ENCODE measurements at regions of chr3 and their contacts with region 1.

Region 1: DNA sequence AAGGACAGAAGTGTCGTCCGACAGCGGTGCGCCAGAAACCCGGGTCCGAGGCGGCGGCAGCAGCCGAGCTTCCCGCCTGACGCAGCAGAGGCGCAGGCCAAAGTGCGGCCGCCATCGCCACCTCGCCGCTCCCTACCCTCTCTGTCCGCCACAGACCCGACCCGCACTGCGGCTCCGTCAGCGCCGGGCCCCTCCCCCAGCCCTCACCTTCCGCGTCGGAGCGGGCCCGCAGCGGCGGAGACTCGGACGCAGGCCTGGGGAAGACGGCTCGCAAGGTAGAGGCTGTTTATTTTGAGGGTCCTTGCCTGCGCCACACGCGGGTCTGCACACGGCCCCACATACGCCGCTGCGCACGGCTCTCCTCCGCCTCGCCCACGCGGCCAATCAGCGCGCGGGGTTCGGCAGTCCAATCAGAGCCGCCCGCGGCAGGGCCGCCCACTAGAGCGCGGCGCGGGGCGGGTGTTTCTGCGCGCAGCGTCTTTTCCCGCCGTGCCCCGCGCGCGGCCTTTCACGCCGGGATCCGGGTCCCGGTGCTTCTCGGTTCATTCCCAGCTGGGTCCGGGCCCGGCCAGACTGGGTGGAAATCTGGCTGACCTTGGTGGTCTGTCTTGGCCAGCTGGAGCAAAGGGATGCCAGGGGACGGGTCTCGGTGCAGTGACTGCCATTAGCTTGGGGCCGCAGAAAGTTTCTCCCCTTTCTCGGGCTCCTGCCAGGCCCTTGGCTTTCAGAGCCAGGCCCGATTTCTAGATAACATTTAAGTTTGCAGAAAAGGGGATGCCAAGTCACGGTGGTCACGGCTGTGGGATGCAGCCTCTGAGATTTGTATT is at the start of gene CNBP:
- DNase-seq: peak; percentile 95
- ATAC-seq: peak; percentile 97
- H3K4me3 ChIP-seq: peak within 1 kb of the TSS; percentile 71 to 100 (median 98)
- H3K4me3 Mint-ChIP-seq: peak within 1 kb of the TSS; percentile 89
- H3K27ac ChIP-seq: peak within 1 kb of the TSS; percentile 90 to 92
- H3K27ac Mint-ChIP-seq: peak within 1 kb of the TSS; percentile 99
- H3K4me1 ChIP-seq: peaks cover 23 to 52% of the 10 kb centered on the region in 2 donors
- H3K4me1 Mint-ChIP-seq: peaks cover 44% of the 10 kb centered on the region
- H3K27me3 ChIP-seq: no peaks in the 10 kb centered on the region
- H3K27me3 Mint-ChIP-seq: no peaks in the 10 kb centered on the region
- CTCF ChIP-seq: no peak
- total RNA-seq, gene CNBP: 294 and 304 TPM in 2 replicates

Region 2: GRCh38 chr3:128879125-128879969 is 304.4 kb before region 1 on chr3 and contains the start of gene ACAD9:
- CTCF ChIA-PET with region 1: no interaction called
- POLR2A ChIA-PET with region 1: no interaction called
- intact Hi-C with region 1: loop called (anchors 5 kb)
- DNase-seq: peak; percentile 97
- ATAC-seq: peak; percentile 96
- H3K4me3 ChIP-seq: peak within 1 kb of the TSS; percentile 86 to 97 (median 88)
- H3K4me3 Mint-ChIP-seq: peak within 1 kb of the TSS; percentile 95
- H3K27ac ChIP-seq: peak within 1 kb of the TSS; percentile 93 to 98
- H3K27ac Mint-ChIP-seq: peak within 1 kb of the TSS; percentile 95
- H3K4me1 ChIP-seq: peaks cover 24 to 31% of the 10 kb centered on the region in 2 donors
- H3K4me1 Mint-ChIP-seq: peaks cover 55% of the 10 kb centered on the region
- H3K27me3 ChIP-seq: no peaks in the 10 kb centered on the region
- H3K27me3 Mint-ChIP-seq: no peaks in the 10 kb centered on the region
- CTCF ChIP-seq: no peak
- total RNA-seq, gene ACAD9: 57.6 and 71.8 TPM in 2 replicates

Region 3: GRCh38 chr3:129095285-129095684 is 88.5 kb before region 1 on chr3:
- CTCF ChIA-PET with region 1: no interaction called
- POLR2A ChIA-PET with region 1: interaction called, 10 read pairs
- intact Hi-C with region 1: no loop called
- DNase-seq: no peak
- ATAC-seq: no peak
- H3K4me3 ChIP-seq: no peak overlapping the region
- H3K4me3 Mint-ChIP-seq: no peak overlapping the region
- H3K27ac ChIP-seq: no peak overlapping the region
- H3K27ac Mint-ChIP-seq: no peak overlapping the region
- H3K4me1 ChIP-seq: no peaks in the 10 kb centered on the region
- H3K4me1 Mint-ChIP-seq: no peaks in the 10 kb centered on the region
- H3K27me3 ChIP-seq: no peaks in the 10 kb centered on the region
- H3K27me3 Mint-ChIP-seq: no peaks in the 10 kb centered on the region
- CTCF ChIP-seq: no peak

Region 4: GRCh38 chr3:129160891-129161859 is 22.6 kb before region 1 on chr3 and contains the start of gene ISY1:
- CTCF ChIA-PET with region 1: interaction called, 7 read pairs
- POLR2A ChIA-PET with region 1: interaction called, 5 read pairs
- intact Hi-C with region 1: loop called (anchors 1 kb)
- DNase-seq: peak; percentile 97
- ATAC-seq: peak; percentile 85
- H3K4me3 ChIP-seq: peak within 1 kb of the TSS; percentile 73 to 99 (median 83)
- H3K4me3 Mint-ChIP-seq: peak within 1 kb of the TSS; percentile 100
- H3K27ac ChIP-seq: peak within 1 kb of the TSS; percentile 92 to 99
- H3K27ac Mint-ChIP-seq: peak within 1 kb of the TSS; percentile 100
- H3K4me1 ChIP-seq: peaks cover 18 to 24% of the 10 kb centered on the region in 2 donors
- H3K4me1 Mint-ChIP-seq: peaks cover 40% of the 10 kb centered on the region
- H3K27me3 ChIP-seq: no peaks in the 10 kb centered on the region
- H3K27me3 Mint-ChIP-seq: no peaks in the 10 kb centered on the region
- CTCF ChIP-seq: peak; percentile 83
- total RNA-seq, gene ISY1: 42.2 and 49.6 TPM in 2 replicates

Region 5: DNA sequence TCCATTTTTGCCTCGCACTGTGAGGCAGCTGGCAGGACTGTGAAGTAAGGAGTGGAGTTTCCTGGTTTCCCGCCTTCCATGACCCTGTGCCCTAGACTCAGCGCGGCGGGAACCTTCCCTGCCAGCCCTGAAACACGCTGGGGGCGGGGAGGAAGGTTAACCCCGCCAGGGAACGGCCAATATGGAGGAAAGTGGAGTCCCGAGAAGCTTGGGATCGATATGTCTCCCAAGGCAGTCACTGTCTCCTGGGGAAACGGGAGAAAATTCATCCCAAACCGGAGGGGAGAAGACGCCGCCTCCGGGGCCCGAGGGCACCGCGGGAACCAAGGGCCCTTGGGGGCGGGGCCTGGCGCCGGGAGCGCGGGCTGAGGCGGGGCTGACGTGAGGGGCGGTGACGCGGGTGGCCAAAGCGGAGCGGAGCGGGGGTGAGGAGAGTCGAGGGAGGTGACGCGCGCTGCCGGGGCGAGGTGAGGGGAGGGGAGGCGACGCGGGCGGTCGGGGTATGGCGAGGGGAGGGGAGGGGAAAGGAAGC is 94.7 kb after region 1 on chr3 and contains the start of gene HMCES:
- CTCF ChIA-PET with region 1: no interaction called
- POLR2A ChIA-PET with region 1: interaction called, 3 read pairs
- intact Hi-C with region 1: loop called (anchors 1 kb)
- DNase-seq: peak; percentile 94
- ATAC-seq: peak; percentile 72
- H3K4me3 ChIP-seq: peak within 1 kb of the TSS; percentile 79 to 92 (median 88)
- H3K4me3 Mint-ChIP-seq: peak within 1 kb of the TSS; percentile 95
- H3K27ac ChIP-seq: peak within 1 kb of the TSS; percentile 86
- H3K27ac Mint-ChIP-seq: peak within 1 kb of the TSS; percentile 91
- H3K4me1 ChIP-seq: peaks cover 67 to 73% of the 10 kb centered on the region in 2 donors
- H3K4me1 Mint-ChIP-seq: peaks cover 73% of the 10 kb centered on the region
- H3K27me3 ChIP-seq: peaks cover 0 to 4% (median 0%) of the 10 kb centered on the region in 4 experiments
- H3K27me3 Mint-ChIP-seq: peaks cover 5% of the 10 kb centered on the region
- CTCF ChIP-seq: no peak
- total RNA-seq, gene HMCES: 22.1 and 22.5 TPM in 2 replicates

Measured in B cell (primary cell).